ENCODE measurements at regions of chr4 and their contacts with region 1.

Region 1: GRCh38 chr4:175386776-175387507 is 425.1 kb downstream of the GPM6A start:
- DNase-seq: no peak
- H3K4me3 ChIP-seq: no peak overlapping the region
- H3K27ac ChIP-seq: no peak overlapping the region
- H3K4me1 ChIP-seq: no peaks in the 10 kb centered on the region
- H3K27me3 ChIP-seq: no peaks in the 10 kb centered on the region
- CTCF ChIP-seq: no peak
- POLR2A ChIP-seq: no peak

Region 2: DNA sequence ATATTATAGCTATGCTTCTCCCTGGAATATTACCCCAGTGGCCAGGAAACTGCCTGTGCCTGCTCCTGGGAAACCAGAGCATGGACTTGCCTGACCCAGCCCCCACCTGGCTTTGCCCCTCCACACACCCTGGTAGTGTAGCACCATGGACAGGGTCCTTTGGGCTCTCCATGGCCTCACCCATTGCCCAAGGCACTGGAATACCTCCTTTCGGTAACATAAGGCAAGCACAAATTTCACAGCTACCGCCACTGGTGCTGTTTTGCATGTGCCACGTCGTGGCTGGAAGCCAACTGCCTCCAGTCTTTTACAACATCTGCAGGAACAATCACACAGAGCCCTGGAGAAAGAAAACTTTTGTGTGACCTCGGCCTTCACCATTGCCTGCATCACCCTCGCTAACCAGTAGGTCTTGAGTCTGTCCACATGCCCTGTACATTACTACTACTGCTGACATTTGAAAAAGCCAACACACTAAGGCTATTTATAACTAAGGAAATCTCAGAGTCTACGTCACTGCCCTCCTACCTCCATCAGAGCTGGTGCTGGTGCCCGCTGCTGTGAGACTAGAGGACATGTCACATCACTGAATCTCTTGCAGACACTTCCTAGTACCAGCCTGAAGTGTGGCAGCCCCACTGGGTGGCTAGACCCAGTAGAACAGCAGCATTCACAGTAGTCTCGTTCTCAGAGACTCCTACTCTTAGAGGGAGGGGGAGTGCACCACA is 912.3 kb before region 1 on chr4:
- intact Hi-C with region 1: no loop called
- DNase-seq: no peak
- H3K4me3 ChIP-seq: no peak overlapping the region
- H3K27ac ChIP-seq: no peak overlapping the region
- H3K4me1 ChIP-seq: no peaks in the 10 kb centered on the region
- H3K27me3 ChIP-seq: no peaks in the 10 kb centered on the region
- CTCF ChIP-seq: no peak
- POLR2A ChIP-seq: no peak

Region 3: GRCh38 chr4:175309051-175309450 is 77.9 kb before region 1 on chr4:
- intact Hi-C with region 1: loop called (anchors 2 kb)
- DNase-seq: no peak
- H3K4me3 ChIP-seq: no peak overlapping the region
- H3K27ac ChIP-seq: no peak overlapping the region
- H3K4me1 ChIP-seq: no peaks in the 10 kb centered on the region
- H3K27me3 ChIP-seq: no peaks in the 10 kb centered on the region
- CTCF ChIP-seq: no peak
- POLR2A ChIP-seq: no peak

Region 4: GRCh38 chr4:175341203-175341755 is 45.7 kb before region 1 on chr4:
- intact Hi-C with region 1: loop called (anchors 2 kb)
- DNase-seq: no peak
- H3K4me3 ChIP-seq: no peak overlapping the region
- H3K27ac ChIP-seq: no peak overlapping the region
- H3K4me1 ChIP-seq: no peaks in the 10 kb centered on the region
- H3K27me3 ChIP-seq: no peaks in the 10 kb centered on the region
- CTCF ChIP-seq: no peak
- POLR2A ChIP-seq: no peak